ENCODE measurements at regions of chr2 and their contacts with region 1.

Region 1: GRCh38 chr2:62407838-62408677 is 97.9 kb downstream of the TMEM17 start:
- DNase-seq: no peak
- H3K4me3 ChIP-seq: no peak overlapping the region
- H3K27ac ChIP-seq: no peak overlapping the region
- H3K4me1 ChIP-seq: peaks cover 63% of the 10 kb centered on the region
- H3K27me3 ChIP-seq: no peaks in the 10 kb centered on the region
- CTCF ChIP-seq: no peak

Region 2: DNA sequence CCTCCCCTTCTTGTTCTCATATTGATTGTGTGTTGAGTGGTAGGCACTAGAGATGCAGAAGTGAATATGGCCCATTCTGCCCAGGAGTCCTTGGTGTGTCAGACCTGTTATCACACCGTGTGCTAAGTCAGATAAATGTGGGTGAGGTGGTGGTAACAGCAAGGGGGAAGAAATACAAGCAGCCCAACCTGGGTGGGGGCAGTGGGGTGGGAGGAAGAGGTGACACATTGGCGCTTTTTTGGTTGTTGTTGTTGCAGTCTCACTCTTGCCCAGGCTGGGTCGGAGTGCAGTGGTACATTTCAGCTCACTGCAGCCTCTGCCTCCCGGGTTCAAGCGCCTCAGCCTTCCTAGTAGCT is 199.3 kb before region 1 on chr2:
- CTCF ChIA-PET with region 1: no interaction called
- POLR2A ChIA-PET with region 1: interaction called, 31 read pairs
- intact Hi-C with region 1: no loop called
- DNase-seq: no peak
- H3K4me3 ChIP-seq: no peak overlapping the region
- H3K27ac ChIP-seq: no peak overlapping the region
- H3K4me1 ChIP-seq: no peaks in the 10 kb centered on the region
- H3K27me3 ChIP-seq: no peaks in the 10 kb centered on the region
- CTCF ChIP-seq: no peak

Region 3: DNA sequence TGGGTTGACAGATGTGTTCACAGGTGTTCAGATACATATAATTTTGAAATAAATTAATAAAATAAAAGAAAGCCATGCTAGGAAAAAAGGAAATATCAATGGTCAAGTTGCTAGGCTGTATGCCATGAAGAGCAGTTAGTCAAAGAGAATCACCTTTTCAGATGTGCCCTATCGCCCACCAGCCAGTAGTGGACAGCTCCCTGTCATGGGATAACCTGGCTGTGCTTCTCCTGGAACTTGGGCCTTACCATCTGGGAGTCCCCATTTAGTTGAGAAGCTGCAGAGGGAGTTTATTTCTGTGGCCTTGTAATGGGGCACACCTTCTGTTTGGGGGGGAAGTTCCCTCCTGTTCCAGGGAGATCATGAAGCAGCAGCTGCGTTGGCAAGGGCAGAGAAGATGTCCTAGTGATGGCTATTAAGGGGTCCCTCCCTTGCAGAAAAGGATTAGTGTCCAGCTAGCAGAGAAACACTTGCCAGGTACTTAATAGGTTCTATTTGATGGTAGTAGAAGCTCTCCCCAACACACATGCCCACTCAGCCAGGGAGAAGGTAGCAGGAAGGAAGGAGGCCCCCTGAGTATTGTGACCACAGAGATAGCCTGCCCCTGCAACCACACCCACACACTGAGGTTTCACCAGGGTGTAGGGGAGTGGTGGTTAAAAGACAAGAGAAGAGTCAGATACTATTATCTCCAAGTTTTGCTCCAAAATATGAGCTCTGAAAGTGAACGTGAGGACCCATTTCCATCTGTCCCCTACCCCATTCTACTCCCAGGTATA is 94.4 kb before region 1 on chr2:
- CTCF ChIA-PET with region 1: no interaction called
- POLR2A ChIA-PET with region 1: no interaction called
- intact Hi-C with region 1: no loop called
- DNase-seq: no peak
- H3K4me3 ChIP-seq: no peak overlapping the region
- H3K27ac ChIP-seq: no peak overlapping the region
- H3K4me1 ChIP-seq: peaks cover 5% of the 10 kb centered on the region
- H3K27me3 ChIP-seq: no peaks in the 10 kb centered on the region
- CTCF ChIP-seq: no peak

Measured in PC-9 (cell line).